CD4-positive, alpha-beta T cell (primary cell): ENCODE measurements at regions of chr14 and their contacts with region 1.

Region 1: GRCh38 chr14:64434528-64434927 is 30.8 kb upstream of the AKAP5 start:
- DNase-seq: no peak
- ATAC-seq: no peak
- H3K4me3 ChIP-seq: no peak overlapping the region
- H3K4me3 Mint-ChIP-seq: no peak overlapping the region
- H3K27ac ChIP-seq: no peak overlapping the region
- H3K27ac Mint-ChIP-seq: no peak overlapping the region
- H3K4me1 ChIP-seq: no peaks in the 10 kb centered on the region
- H3K4me1 Mint-ChIP-seq: peaks cover 10% of the 10 kb centered on the region
- H3K27me3 ChIP-seq: no peaks in the 10 kb centered on the region
- H3K27me3 Mint-ChIP-seq: no peaks in the 10 kb centered on the region
- CTCF ChIP-seq: no peak

Region 2: DNA sequence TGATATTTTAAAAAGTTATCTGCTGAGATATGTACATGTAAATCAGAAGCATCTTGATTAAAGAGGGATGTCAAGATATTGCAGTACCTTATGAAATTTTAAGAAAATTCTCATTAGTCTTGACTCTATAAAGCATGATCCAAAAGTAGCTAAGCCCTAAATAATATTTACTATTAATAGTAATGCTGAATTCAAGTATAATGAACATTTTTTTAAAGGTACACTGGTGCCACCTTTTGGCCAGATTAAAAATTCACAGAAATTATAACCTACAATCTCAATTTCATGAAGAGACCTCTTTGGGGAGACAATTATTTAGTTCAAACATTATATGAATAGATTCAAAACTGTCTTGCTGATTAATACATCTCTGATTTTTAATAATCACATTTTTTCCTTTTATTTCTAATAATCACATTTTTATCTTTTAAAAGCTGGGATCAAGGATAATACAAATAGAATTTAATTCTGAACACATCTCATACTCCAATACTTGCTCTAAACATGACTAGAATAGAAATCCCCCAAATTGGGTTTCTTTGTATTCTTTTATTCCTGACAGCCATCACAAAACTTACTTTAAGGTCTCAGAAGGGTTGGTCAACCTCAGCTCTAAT is 44.2 kb after region 1 on chr14:
- CTCF ChIA-PET with region 1: interaction called, 18 read pairs
- POLR2A ChIA-PET with region 1: no interaction called
- intact Hi-C with region 1: loop called (anchors 1 to 2 kb)
- DNase-seq: peak in 4 of 14 experiments; percentile 20 to 63 (median 57)
- ATAC-seq: no peak
- H3K4me3 ChIP-seq: no peak overlapping the region
- H3K4me3 Mint-ChIP-seq: no peak overlapping the region
- H3K27ac ChIP-seq: no peak overlapping the region
- H3K27ac Mint-ChIP-seq: peak overlapping the region; percentile 25
- H3K4me1 ChIP-seq: no peaks in the 10 kb centered on the region
- H3K4me1 Mint-ChIP-seq: peaks cover 27% of the 10 kb centered on the region
- H3K27me3 ChIP-seq: no peaks in the 10 kb centered on the region
- H3K27me3 Mint-ChIP-seq: no peaks in the 10 kb centered on the region
- CTCF ChIP-seq: peak; percentile 75

Region 3: DNA sequence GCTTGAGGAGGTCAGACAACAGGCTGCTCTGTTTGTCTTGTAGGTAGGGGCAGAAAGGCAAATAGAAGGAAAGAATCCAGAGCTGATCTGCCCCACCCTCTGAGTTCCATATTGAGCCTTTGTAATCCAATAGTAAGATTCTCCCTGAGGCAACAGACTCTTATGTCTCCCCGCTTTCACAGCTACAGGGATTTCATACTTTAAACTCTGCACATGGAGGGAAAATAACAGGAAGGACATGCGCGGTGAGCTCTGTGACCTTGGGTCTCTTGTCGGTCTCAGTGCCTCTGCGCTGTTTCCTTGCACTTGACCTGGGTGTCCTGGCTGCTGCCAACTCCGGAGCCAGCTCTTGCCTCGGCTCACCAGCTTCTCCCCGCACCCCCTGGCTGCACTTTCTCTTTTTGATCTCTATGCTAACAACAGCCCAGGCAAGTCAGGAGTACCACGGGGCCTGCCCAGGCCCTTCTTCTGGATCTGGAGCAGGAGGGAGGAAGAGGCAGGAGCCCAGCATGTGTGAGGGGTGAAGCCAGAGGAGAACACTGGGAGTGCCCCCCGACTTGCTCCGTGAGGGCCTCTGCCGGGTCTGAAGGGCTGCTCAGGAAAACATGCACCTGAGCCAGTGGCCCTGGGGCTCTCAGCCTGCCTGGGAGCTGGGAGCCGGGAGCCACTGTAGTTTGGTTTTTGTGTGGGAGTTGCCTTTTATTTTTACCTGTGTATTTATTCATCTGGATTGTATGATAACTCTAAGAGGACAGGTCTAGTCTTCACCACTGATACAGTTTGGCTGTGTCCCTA is 191.1 kb after region 1 on chr14:
- CTCF ChIA-PET with region 1: no interaction called
- POLR2A ChIA-PET with region 1: no interaction called
- intact Hi-C with region 1: no loop called
- DNase-seq: no peak
- ATAC-seq: no peak
- H3K4me3 ChIP-seq: no peak overlapping the region
- H3K4me3 Mint-ChIP-seq: no peak overlapping the region
- H3K27ac ChIP-seq: no peak overlapping the region
- H3K27ac Mint-ChIP-seq: no peak overlapping the region
- H3K4me1 ChIP-seq: no peaks in the 10 kb centered on the region
- H3K4me1 Mint-ChIP-seq: no peaks in the 10 kb centered on the region
- H3K27me3 ChIP-seq: no peaks in the 10 kb centered on the region
- H3K27me3 Mint-ChIP-seq: no peaks in the 10 kb centered on the region
- CTCF ChIP-seq: no peak

Region 4: GRCh38 chr14:64636208-64636979 is 201.9 kb after region 1 on chr14:
- CTCF ChIA-PET with region 1: no interaction called
- POLR2A ChIA-PET with region 1: no interaction called
- intact Hi-C with region 1: loop called (anchors 1 to 5 kb)
- DNase-seq: peak; percentile 44 to 83 (median 65)
- ATAC-seq: peak; percentile 95
- H3K4me3 ChIP-seq: no peak overlapping the region
- H3K4me3 Mint-ChIP-seq: no peak overlapping the region
- H3K27ac ChIP-seq: no peak overlapping the region
- H3K27ac Mint-ChIP-seq: no peak overlapping the region
- H3K4me1 ChIP-seq: peaks cover 6% of the 10 kb centered on the region
- H3K4me1 Mint-ChIP-seq: no peaks in the 10 kb centered on the region
- H3K27me3 ChIP-seq: peaks cover 0 to 9% of the 10 kb centered on the region in 2 experiments
- H3K27me3 Mint-ChIP-seq: peaks cover 11% of the 10 kb centered on the region
- CTCF ChIP-seq: peak; percentile 92

Region 5: GRCh38 chr14:65239143-65239937 is 804.8 kb after region 1 on chr14:
- CTCF ChIA-PET with region 1: no interaction called
- POLR2A ChIA-PET with region 1: no interaction called
- intact Hi-C with region 1: no loop called
- DNase-seq: no peak
- ATAC-seq: no peak
- H3K4me3 ChIP-seq: no peak overlapping the region
- H3K4me3 Mint-ChIP-seq: no peak overlapping the region
- H3K27ac ChIP-seq: no peak overlapping the region
- H3K27ac Mint-ChIP-seq: no peak overlapping the region
- H3K4me1 ChIP-seq: peaks cover 14% of the 10 kb centered on the region
- H3K4me1 Mint-ChIP-seq: peaks cover 5% of the 10 kb centered on the region
- H3K27me3 ChIP-seq: no peaks in the 10 kb centered on the region
- H3K27me3 Mint-ChIP-seq: no peaks in the 10 kb centered on the region
- CTCF ChIP-seq: no peak